KBM-7 (cell line): ENCODE measurements at regions of chr6 and their contacts with region 1.

Region 1: GRCh38 chr6:27132532-27133280 is 114.8 kb upstream of the PRSS16 start:
- DNase-seq: peak; percentile 100

Region 2: DNA sequence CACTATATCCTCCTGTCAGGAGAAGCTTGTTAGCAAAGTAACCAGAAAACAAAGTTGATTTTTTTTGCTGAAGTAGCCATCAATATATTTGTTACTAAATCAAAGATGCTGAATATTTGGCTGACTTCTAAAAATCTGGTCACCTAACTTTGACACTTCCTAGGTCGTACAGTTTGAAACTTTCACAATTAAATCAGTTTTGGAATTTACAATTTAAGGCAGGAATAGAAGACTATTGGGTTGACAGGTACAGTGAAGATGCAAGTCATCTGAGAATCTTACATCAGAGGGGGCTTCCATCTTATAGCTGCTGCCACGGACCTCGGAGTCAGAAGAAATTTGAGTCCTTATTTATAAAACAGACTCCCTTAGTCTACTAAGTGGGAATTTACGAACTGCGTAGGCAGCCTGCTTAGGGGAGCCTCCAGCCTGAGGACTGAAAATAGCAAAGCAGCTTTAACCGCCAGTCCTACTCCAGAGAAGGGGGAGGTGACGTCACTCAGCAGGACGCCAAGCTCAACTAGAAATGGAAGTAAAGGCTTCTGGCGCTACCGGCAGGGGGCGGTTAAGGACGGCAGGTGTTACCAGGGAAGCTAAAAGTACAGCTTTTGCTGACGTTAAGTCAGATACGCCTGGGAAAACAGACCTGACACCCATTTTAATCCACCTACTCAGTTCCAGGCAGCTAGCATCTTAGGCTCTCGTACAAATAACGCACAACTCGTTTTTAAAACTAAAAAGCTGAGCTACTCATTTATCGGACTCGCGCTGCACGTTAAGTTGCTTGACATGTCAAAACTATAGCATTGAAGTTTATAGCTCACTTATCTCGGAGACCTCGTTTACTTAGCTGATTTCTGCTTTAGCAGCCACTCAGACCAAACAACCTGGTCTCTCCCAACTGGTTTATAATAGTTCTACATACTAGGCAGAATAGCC is 1106.5 kb before region 1 on chr6:
- in situ Hi-C with region 1: loop called (anchors 25 kb)
- DNase-seq: peak; percentile 96

Region 3: GRCh38 chr6:26196846-26197648 is 935.7 kb before region 1 on chr6:
- in situ Hi-C with region 1: loop called (anchors 25 kb)
- DNase-seq: peak; percentile 97